Activated CD4-positive, alpha-beta T cell treated with anti-CD3 and anti-CD28 coated beads for 36 hours (primary cell): ENCODE measurements at regions of chr5 and their contacts with region 1.

Region 1: GRCh38 chr5:66306105-66306843 is 162.2 kb downstream of the SREK1 start:
- DNase-seq: peak; percentile 45
- ATAC-seq: peak; percentile 73
- H3K4me3 Mint-ChIP-seq: no peak overlapping the region
- H3K27ac Mint-ChIP-seq: no peak overlapping the region
- H3K4me1 Mint-ChIP-seq: peaks cover 2% of the 10 kb centered on the region
- H3K27me3 Mint-ChIP-seq: peaks cover 8% of the 10 kb centered on the region

Region 2: GRCh38 chr5:66348387-66349125 is 42.3 kb after region 1 on chr5:
- CTCF ChIA-PET with region 1: interaction called, 13 read pairs
- POLR2A ChIA-PET with region 1: interaction called, 3 read pairs
- intact Hi-C with region 1: no loop called
- DNase-seq: no peak
- ATAC-seq: no peak
- H3K4me3 Mint-ChIP-seq: no peak overlapping the region
- H3K27ac Mint-ChIP-seq: no peak overlapping the region
- H3K4me1 Mint-ChIP-seq: no peaks in the 10 kb centered on the region
- H3K27me3 Mint-ChIP-seq: peaks cover 13% of the 10 kb centered on the region

Region 3: GRCh38 chr5:66498791-66499207 is 192.5 kb after region 1 on chr5:
- CTCF ChIA-PET with region 1: interaction called, 7 read pairs
- POLR2A ChIA-PET with region 1: no interaction called
- intact Hi-C with region 1: loop called (anchors 2 kb)
- DNase-seq: peak; percentile 30
- ATAC-seq: no peak
- H3K4me3 Mint-ChIP-seq: no peak overlapping the region
- H3K27ac Mint-ChIP-seq: no peak overlapping the region
- H3K4me1 Mint-ChIP-seq: no peaks in the 10 kb centered on the region
- H3K27me3 Mint-ChIP-seq: peaks cover 9% of the 10 kb centered on the region

Region 4: GRCh38 chr5:66757188-66757833 is 451.0 kb after region 1 on chr5:
- CTCF ChIA-PET with region 1: interaction called, 63 read pairs
- POLR2A ChIA-PET with region 1: no interaction called
- intact Hi-C with region 1: loop called (anchors 1 kb)
- DNase-seq: peak; percentile 64
- ATAC-seq: no peak
- H3K4me3 Mint-ChIP-seq: no peak overlapping the region
- H3K27ac Mint-ChIP-seq: no peak overlapping the region
- H3K4me1 Mint-ChIP-seq: no peaks in the 10 kb centered on the region
- H3K27me3 Mint-ChIP-seq: peaks cover 11% of the 10 kb centered on the region

Region 5: GRCh38 chr5:66987949-66988838 is 681.9 kb after region 1 on chr5:
- CTCF ChIA-PET with region 1: interaction called, 4 read pairs
- POLR2A ChIA-PET with region 1: no interaction called
- intact Hi-C with region 1: loop called in 1 of 2 experiments (anchors 10 kb)
- DNase-seq: no peak
- ATAC-seq: peak; percentile 69
- H3K4me3 Mint-ChIP-seq: no peak overlapping the region
- H3K27ac Mint-ChIP-seq: no peak overlapping the region
- H3K4me1 Mint-ChIP-seq: peaks cover 2% of the 10 kb centered on the region
- H3K27me3 Mint-ChIP-seq: no peaks in the 10 kb centered on the region